ENCODE measurements at regions of chr20 and their contacts with region 1.

Region 1: GRCh38 chr20:45969347-45970242 is 2.4 kb downstream of the ZNF335 start:
- DNase-seq: peak in 1 of 2 donors; percentile 85
- H3K4me3 ChIP-seq: no peak overlapping the region
- CTCF ChIP-seq: no peak
- POLR2A ChIP-seq: no peak

Region 2: DNA sequence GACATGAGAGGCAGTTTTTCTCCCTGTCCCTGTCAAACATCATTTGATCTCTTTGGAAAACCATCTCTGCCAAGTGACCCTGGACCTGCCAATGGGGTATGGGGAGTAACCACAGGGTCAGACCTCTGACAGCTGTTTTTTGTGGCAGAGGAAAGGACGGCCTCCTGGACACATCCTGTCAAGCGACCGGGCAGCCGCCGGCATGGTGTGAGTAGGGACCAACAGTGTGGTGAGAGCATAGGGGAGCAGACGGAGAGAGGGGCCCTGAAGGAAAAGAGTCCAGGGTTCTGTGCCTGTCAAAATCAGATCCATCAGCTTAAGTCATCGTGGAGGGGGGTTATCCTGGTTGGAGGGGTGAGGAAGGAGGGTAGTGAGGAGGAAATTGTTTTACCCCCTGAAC is 167.7 kb before region 1 on chr20:
- intact Hi-C with region 1: loop called (anchors 10 kb)
- DNase-seq: no peak
- H3K4me3 ChIP-seq: no peak overlapping the region
- CTCF ChIP-seq: no peak
- POLR2A ChIP-seq: no peak

Measured in lower leg skin (tissue), 4 donors.